Calu3 (cell line): ENCODE measurements at regions of chr16 and their contacts with region 1.

Region 1: GRCh38 chr16:70380861-70381603 is 34.3 kb downstream of the DDX19A start:
- DNase-seq: peak; percentile 98
- H3K4me3 Mint-ChIP-seq: peak overlapping the region; percentile 90
- H3K27ac Mint-ChIP-seq: peak overlapping the region; percentile 97
- H3K4me1 Mint-ChIP-seq: no peaks in the 10 kb centered on the region
- H3K27me3 Mint-ChIP-seq: no peaks in the 10 kb centered on the region
- CTCF ChIP-seq: peak; percentile 50

Region 2: GRCh38 chr16:70402916-70403659 is 22.1 kb after region 1 on chr16:
- CTCF ChIA-PET with region 1: no interaction called
- intact Hi-C with region 1: no loop called
- DNase-seq: no peak
- H3K4me3 Mint-ChIP-seq: no peak overlapping the region
- H3K27ac Mint-ChIP-seq: no peak overlapping the region
- H3K4me1 Mint-ChIP-seq: peaks cover 10% of the 10 kb centered on the region
- H3K27me3 Mint-ChIP-seq: no peaks in the 10 kb centered on the region
- CTCF ChIP-seq: no peak

Region 3: DNA sequence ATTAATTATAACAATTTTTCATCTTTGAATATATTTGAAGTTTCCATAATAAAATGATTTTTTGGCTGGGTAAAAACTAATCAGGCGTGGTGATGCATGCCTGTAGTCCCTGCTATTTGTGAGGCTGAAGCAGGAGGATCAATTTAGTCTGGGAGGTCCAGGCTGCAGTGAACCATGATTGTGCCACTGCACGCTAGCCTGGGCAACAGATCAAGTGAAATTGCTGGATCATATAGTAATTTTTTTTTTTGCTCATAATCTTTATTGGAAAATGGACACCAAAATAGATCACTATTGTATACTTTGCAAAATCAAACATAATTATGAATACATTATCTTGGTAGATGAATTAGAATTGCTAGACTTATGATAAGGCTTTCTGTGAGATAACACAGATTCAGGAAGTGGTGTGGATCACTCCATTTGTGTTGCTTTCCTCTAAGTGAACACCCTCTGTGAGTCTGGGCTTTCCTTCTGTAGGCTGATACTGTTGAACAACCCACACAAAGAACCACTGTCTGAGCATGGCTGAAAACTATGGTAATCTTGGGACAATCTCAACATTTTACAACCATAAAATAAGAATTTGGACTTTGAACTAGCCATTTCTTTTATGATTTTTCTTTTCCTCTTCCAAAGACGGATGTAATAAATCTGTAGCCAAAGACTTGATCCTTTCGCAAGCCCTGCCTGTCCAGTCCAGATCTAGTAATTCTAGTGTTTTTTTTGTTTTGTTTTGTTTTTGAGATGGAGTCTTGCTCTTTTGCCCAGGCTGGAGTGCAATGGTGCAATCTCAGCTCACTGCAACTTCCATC is 63.4 kb after region 1 on chr16:
- CTCF ChIA-PET with region 1: interaction called, 6 read pairs
- intact Hi-C with region 1: loop called (anchors 5 kb)
- DNase-seq: no peak
- H3K4me3 Mint-ChIP-seq: no peak overlapping the region
- H3K27ac Mint-ChIP-seq: no peak overlapping the region
- H3K4me1 Mint-ChIP-seq: peaks cover 8% of the 10 kb centered on the region
- H3K27me3 Mint-ChIP-seq: no peaks in the 10 kb centered on the region
- CTCF ChIP-seq: no peak

Region 4: GRCh38 chr16:70454222-70455034 is 73.4 kb after region 1 on chr16 and contains the start of gene FCSK:
- CTCF ChIA-PET with region 1: interaction called, 11 read pairs
- intact Hi-C with region 1: loop called (anchors 2 kb)
- DNase-seq: peak; percentile 76
- H3K4me3 Mint-ChIP-seq: peak within 1 kb of the TSS; percentile 99
- H3K27ac Mint-ChIP-seq: peak within 1 kb of the TSS; percentile 70
- H3K4me1 Mint-ChIP-seq: peaks cover 9% of the 10 kb centered on the region
- H3K27me3 Mint-ChIP-seq: no peaks in the 10 kb centered on the region
- CTCF ChIP-seq: no peak
- total RNA-seq, gene FCSK: 27.6 and 29.1 TPM in 2 replicates

Region 5: GRCh38 chr16:70470927-70471341 is 89.9 kb after region 1 on chr16:
- CTCF ChIA-PET with region 1: interaction called, 13 read pairs
- intact Hi-C with region 1: loop called (anchors 2 kb)
- DNase-seq: peak; percentile 53
- H3K4me3 Mint-ChIP-seq: no peak overlapping the region
- H3K27ac Mint-ChIP-seq: no peak overlapping the region
- H3K4me1 Mint-ChIP-seq: peaks cover 6% of the 10 kb centered on the region
- H3K27me3 Mint-ChIP-seq: no peaks in the 10 kb centered on the region
- CTCF ChIP-seq: peak; percentile 25

Region 6: GRCh38 chr16:70480127-70481105 is 99.4 kb after region 1 on chr16:
- CTCF ChIA-PET with region 1: interaction called, 13 read pairs
- intact Hi-C with region 1: loop called (anchors 2 kb)
- DNase-seq: no peak
- H3K4me3 Mint-ChIP-seq: no peak overlapping the region
- H3K27ac Mint-ChIP-seq: no peak overlapping the region
- H3K4me1 Mint-ChIP-seq: peaks cover 14% of the 10 kb centered on the region
- H3K27me3 Mint-ChIP-seq: no peaks in the 10 kb centered on the region
- CTCF ChIP-seq: no peak

Region 7: DNA sequence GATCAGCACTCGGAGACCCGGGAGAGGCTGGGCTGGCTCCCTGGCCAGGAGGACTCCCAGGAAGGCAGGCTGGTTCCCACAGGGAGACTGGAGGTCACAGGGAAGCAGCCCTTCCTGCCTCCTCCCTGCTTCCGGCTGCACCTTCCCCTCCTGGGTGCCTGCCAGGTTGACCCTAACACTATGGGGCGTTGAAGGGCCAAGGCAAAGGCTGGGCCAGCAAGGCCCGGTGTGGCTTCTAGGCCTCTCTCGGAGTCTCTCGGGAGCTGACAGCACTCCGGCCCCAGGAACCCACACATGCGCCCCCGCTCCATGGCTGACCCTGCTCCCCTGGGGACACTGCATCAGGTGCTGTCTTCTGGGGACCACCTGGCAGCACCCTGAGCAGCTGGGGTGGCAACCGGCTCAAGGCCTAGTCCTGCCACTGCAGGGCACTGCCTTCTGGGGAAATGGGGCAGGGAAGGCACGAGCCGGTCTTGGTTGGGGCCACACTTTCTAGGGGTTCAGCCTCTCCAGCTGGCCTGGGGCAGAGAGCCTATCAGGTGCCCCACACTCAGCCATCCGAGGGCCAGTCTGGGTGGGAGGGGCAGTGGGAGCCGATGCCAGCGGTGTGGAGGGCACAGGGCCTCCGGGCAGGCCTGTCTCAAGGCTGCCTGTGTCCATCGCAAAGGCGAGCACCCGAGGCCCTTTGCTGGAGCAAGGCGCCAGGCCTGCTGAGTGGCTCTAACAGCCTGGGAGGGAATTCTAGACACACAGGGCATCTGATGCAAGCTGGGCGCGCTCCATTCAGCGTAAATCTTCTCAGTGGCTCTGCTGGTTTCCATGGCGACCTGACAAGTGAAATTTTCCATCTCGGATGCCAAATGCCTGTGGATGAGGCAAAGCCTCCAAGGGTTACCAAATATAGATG is 310.4 kb after region 1 on chr16:
- CTCF ChIA-PET with region 1: no interaction called
- intact Hi-C with region 1: no loop called
- DNase-seq: no peak
- H3K4me3 Mint-ChIP-seq: no peak overlapping the region
- H3K27ac Mint-ChIP-seq: no peak overlapping the region
- H3K4me1 Mint-ChIP-seq: peaks cover 27% of the 10 kb centered on the region
- H3K27me3 Mint-ChIP-seq: no peaks in the 10 kb centered on the region
- CTCF ChIP-seq: no peak